Naive thymus-derived CD4-positive, alpha-beta T cell (primary cell): ENCODE measurements at regions of chr2 and their contacts with region 1.

Region 1: GRCh38 chr2:75676464-75676863 is 29.9 kb downstream of the MRPL19 start:
- DNase-seq: no peak
- ATAC-seq: no peak
- H3K4me3 ChIP-seq: no peak overlapping the region
- H3K4me3 Mint-ChIP-seq: no peak overlapping the region
- H3K27ac ChIP-seq: no peak overlapping the region
- H3K27ac Mint-ChIP-seq: no peak overlapping the region
- H3K4me1 ChIP-seq: no peaks in the 10 kb centered on the region
- H3K4me1 Mint-ChIP-seq: peaks cover 0 to 10% (median 6%) of the 10 kb centered on the region in 7 donors
- H3K27me3 ChIP-seq: no peaks in the 10 kb centered on the region
- H3K27me3 Mint-ChIP-seq: no peaks in the 10 kb centered on the region

Region 2: DNA sequence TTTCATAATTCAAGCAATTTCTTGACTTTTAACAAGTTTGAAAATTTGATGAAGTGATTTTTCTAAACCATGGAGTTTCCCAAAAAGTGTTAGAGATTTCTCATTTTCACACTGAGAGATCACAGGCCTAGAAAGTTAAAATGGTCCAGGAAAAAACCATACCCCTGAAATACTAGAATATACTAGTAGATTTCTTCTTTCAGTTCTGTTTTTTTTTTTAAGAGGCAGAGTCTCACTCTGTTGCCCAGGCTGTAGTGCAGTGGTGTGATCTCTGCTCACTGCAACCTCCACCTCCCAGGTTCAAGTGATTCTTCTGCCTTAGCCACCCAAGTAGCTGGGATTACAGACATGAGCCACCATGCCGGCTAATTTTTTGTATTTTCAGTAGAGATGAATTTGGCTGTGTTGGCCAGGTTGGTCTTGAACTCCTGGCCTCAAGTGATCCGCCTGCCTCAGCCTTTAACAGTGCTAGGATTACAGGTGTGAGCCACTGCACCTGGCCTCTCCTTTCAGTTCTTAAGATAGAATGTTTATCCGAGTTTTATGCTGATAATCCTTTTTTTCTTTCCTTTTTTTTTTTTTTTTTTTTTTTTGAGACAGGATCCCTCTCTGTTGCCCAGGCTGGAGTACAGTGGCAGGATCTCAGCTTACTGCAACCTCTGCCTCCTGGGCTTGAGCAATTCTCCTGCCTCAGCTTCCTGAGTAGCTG is 1463.6 kb before region 1 on chr2:
- CTCF ChIA-PET with region 1: no interaction called
- POLR2A ChIA-PET with region 1: no interaction called
- intact Hi-C with region 1: no loop called
- DNase-seq: no peak
- ATAC-seq: no peak
- H3K4me3 ChIP-seq: no peak overlapping the region
- H3K4me3 Mint-ChIP-seq: no peak overlapping the region
- H3K27ac ChIP-seq: no peak overlapping the region
- H3K27ac Mint-ChIP-seq: no peak overlapping the region
- H3K4me1 ChIP-seq: peaks cover 0 to 2% of the 10 kb centered on the region in 2 donors
- H3K4me1 Mint-ChIP-seq: peaks cover 0 to 25% (median 0%) of the 10 kb centered on the region in 7 donors
- H3K27me3 ChIP-seq: no peaks in the 10 kb centered on the region
- H3K27me3 Mint-ChIP-seq: no peaks in the 10 kb centered on the region

Region 3: GRCh38 chr2:75640621-75641121 is 35.8 kb before region 1 on chr2:
- CTCF ChIA-PET with region 1: interaction called, 5 read pairs
- POLR2A ChIA-PET with region 1: interaction called, 4 read pairs
- intact Hi-C with region 1: loop called (anchors 1 kb)
- DNase-seq: peak in 8 of 9 donors; percentile 5 to 44 (median 27)
- ATAC-seq: peak; percentile 96
- H3K4me3 ChIP-seq: no peak overlapping the region
- H3K4me3 Mint-ChIP-seq: no peak overlapping the region
- H3K27ac ChIP-seq: no peak overlapping the region
- H3K27ac Mint-ChIP-seq: no peak overlapping the region
- H3K4me1 ChIP-seq: no peaks in the 10 kb centered on the region
- H3K4me1 Mint-ChIP-seq: peaks cover 0 to 4% (median 0%) of the 10 kb centered on the region in 7 donors
- H3K27me3 ChIP-seq: no peaks in the 10 kb centered on the region
- H3K27me3 Mint-ChIP-seq: peaks cover 17 to 30% (median 25%) of the 10 kb centered on the region in 5 donors

Region 4: GRCh38 chr2:75710577-75711253 is 34.3 kb after region 1 on chr2 and contains the start of gene GCFC2:
- CTCF ChIA-PET with region 1: interaction called, 4 read pairs
- POLR2A ChIA-PET with region 1: no interaction called
- intact Hi-C with region 1: loop called in 1 of 2 experiments (anchors 2 kb)
- DNase-seq: peak; percentile 70 to 91 (median 83)
- ATAC-seq: peak; percentile 91
- H3K4me3 ChIP-seq: peak within 1 kb of the TSS; percentile 78
- H3K4me3 Mint-ChIP-seq: peak within 1 kb of the TSS; percentile 72 to 98 (median 95)
- H3K27ac ChIP-seq: peak within 1 kb of the TSS; percentile 79
- H3K27ac Mint-ChIP-seq: peak within 1 kb of the TSS; percentile 96 to 98 (median 98)
- H3K4me1 ChIP-seq: peaks cover 0 to 13% of the 10 kb centered on the region in 2 donors
- H3K4me1 Mint-ChIP-seq: peaks cover 10 to 50% (median 33%) of the 10 kb centered on the region in 7 donors
- H3K27me3 ChIP-seq: no peaks in the 10 kb centered on the region
- H3K27me3 Mint-ChIP-seq: peaks cover 0 to 10% (median 4%) of the 10 kb centered on the region in 5 donors
- total RNA-seq, gene GCFC2: 15.8 to 29.1 (median 23.5) TPM

Region 5: DNA sequence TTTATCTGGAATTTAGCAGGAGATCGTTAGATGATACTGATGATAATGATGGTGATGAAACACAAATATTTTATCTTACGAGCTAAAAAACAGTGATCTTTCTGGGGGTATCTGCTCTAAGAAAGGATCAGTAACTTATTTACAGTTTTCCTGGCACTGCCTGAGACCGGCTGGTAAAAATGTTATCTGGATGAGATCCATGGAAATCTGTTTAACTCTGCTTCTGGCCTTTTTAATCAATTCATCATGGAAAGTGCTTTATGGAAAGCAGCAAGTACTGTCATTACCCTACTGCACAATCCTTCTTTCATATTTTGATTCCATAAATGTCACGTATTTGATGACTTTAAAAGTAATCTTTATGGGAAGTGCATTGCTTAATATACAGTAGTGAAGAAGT is 646.9 kb after region 1 on chr2:
- CTCF ChIA-PET with region 1: no interaction called
- POLR2A ChIA-PET with region 1: no interaction called
- intact Hi-C with region 1: no loop called
- DNase-seq: no peak
- ATAC-seq: no peak
- H3K4me3 ChIP-seq: no peak overlapping the region
- H3K4me3 Mint-ChIP-seq: no peak overlapping the region
- H3K27ac ChIP-seq: no peak overlapping the region
- H3K27ac Mint-ChIP-seq: no peak overlapping the region
- H3K4me1 ChIP-seq: no peaks in the 10 kb centered on the region
- H3K4me1 Mint-ChIP-seq: no peaks in the 10 kb centered on the region
- H3K27me3 ChIP-seq: no peaks in the 10 kb centered on the region
- H3K27me3 Mint-ChIP-seq: no peaks in the 10 kb centered on the region